AG04450 (cell line): ENCODE measurements at regions of chr2 and their contacts with region 1.

Region 1: GRCh38 chr2:71798266-71799012 is 345.1 kb downstream of the DYSF start:
- DNase-seq: no peak
- H3K4me3 ChIP-seq: no peak overlapping the region
- H3K27ac ChIP-seq: no peak overlapping the region
- H3K27me3 ChIP-seq: peaks cover 5% of the 10 kb centered on the region
- CTCF ChIP-seq: peak; percentile 74

Region 2: GRCh38 chr2:71452565-71452964 is 345.9 kb before region 1 on chr2:
- CTCF ChIA-PET with region 1: no interaction called
- POLR2A ChIA-PET with region 1: no interaction called
- DNase-seq: no peak
- H3K4me3 ChIP-seq: no peak overlapping the region
- H3K27ac ChIP-seq: no peak overlapping the region
- H3K27me3 ChIP-seq: peaks cover 31% of the 10 kb centered on the region
- CTCF ChIP-seq: no peak

Region 3: DNA sequence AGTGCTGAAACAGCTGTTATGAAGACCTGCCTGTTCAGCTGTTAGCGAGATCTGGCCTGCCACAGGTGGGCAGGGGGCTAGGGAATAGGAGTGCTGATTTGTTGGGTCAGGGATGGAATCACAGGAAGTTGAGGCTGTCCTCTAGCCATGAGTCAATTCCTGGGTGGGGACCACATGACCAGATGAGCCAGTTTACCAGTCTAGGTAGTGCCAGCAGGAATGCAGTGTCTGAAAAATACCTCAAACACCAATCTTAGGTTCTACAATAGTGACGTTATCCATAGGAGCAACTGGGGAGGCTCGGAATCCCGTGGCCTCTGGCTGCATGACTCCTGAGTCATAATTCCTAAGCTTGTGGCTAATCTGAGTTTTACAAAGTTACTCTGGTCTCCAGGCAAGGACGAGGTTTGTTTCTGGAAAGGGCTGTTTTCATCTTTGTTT is 300.2 kb before region 1 on chr2:
- CTCF ChIA-PET with region 1: no interaction called
- POLR2A ChIA-PET with region 1: no interaction called
- DNase-seq: peak; percentile 26
- H3K4me3 ChIP-seq: no peak overlapping the region
- H3K27ac ChIP-seq: peak overlapping the region; percentile 53
- H3K27me3 ChIP-seq: no peaks in the 10 kb centered on the region
- CTCF ChIP-seq: no peak

Region 4: DNA sequence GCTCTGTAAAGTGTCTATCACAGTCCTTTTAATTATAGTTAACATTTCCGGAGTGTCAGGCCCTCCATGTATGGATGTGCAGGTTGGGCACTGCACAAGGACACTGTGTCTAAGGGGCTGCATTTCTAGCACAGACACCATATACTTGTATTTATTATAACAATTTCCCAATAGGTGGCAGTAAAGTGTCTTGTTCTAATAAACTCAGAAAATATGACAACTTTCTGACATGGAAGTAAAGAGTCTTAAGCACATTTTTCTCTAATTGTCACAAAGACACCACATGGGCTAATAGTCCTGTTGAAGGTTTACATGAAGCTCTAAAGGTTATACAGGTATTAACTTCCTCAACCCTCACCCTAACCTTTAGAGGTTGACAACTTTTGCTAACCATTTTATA is 188.5 kb before region 1 on chr2:
- CTCF ChIA-PET with region 1: interaction called, 19 read pairs
- POLR2A ChIA-PET with region 1: no interaction called
- DNase-seq: no peak
- H3K4me3 ChIP-seq: no peak overlapping the region
- H3K27ac ChIP-seq: no peak overlapping the region
- H3K27me3 ChIP-seq: peaks cover 31% of the 10 kb centered on the region
- CTCF ChIP-seq: peak; percentile 33

Region 5: DNA sequence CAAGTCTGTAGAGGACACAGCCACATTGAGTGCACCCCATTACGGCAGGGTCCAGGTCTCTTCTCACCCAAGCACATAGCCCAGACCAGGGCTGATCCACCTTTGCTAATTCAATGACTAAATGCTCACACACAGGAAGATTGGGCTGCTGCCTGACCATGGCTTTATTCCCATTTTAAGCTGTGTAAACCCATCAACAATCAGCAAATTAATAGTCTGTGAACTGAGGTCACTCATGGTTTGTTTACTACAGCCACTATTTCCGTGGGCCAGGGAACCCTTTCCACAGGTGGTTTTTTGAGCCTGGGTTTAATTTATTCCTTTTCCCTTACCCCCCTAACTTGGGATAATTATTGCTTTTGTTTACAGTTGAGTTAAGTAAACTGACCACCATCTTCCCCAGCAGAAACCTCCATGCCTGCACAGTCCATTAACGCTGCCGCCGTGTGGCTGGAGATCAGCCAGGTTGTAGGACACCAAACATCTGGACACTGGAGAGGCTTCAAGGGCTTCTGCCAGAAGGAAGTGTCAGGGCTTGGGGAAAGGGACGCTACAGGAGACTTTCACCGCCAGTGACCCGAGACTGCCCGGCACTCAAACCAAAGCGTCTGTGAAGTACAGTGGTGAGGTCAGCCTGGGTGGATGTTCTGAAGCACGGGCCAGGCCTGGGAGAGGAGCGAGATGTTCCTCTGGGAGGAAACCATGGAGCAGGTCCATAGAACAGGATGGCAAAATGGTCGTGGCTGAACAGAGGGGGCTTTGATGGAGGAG is 62.2 kb before region 1 on chr2:
- CTCF ChIA-PET with region 1: no interaction called
- POLR2A ChIA-PET with region 1: interaction called, 12 read pairs
- DNase-seq: no peak
- H3K4me3 ChIP-seq: no peak overlapping the region
- H3K27ac ChIP-seq: no peak overlapping the region
- H3K27me3 ChIP-seq: peaks cover 27% of the 10 kb centered on the region
- CTCF ChIP-seq: no peak

Region 6: DNA sequence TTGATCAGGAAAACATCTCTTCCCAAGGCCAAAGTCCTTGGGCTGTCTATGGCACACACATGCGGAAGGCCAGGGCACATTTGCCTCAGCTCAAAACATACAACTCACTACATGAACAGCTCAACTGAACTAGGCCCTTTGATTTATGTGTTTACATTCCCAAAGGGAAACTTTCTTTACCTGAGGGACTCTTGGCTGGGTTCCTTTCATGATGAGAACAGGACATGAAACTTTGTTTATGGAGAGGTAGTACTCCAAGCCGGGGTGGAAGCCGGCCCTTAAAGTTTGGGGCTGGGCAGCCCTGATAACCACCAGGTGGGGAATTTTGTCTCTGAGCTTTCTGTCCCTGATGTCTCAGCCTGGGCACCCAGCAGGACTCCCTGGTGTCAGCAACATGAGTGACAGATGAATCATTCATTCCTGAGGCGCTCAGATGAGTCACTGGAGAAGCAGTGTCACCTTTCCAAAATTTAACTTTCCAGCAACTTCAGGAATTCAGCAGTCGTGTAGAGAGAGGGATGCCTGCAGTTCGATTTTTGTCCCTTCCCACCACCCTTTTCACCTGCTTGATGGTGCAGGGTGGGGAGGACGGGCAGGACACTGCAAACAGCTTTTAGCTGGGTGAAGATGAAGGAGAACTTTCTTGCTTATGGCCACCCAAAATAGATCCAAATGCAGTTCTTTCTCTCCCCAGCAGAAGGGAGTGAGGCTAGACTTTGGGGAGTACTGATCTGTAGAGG is 13.5 kb before region 1 on chr2:
- CTCF ChIA-PET with region 1: interaction called, 21 read pairs
- POLR2A ChIA-PET with region 1: no interaction called
- DNase-seq: no peak
- H3K4me3 ChIP-seq: no peak overlapping the region
- H3K27ac ChIP-seq: peak overlapping the region; percentile 11
- H3K27me3 ChIP-seq: peaks cover 3% of the 10 kb centered on the region
- CTCF ChIP-seq: no peak

Region 7: GRCh38 chr2:71889991-71890684 is 91.7 kb after region 1 on chr2:
- CTCF ChIA-PET with region 1: no interaction called
- POLR2A ChIA-PET with region 1: no interaction called
- DNase-seq: no peak
- H3K4me3 ChIP-seq: no peak overlapping the region
- H3K27ac ChIP-seq: no peak overlapping the region
- H3K27me3 ChIP-seq: peaks cover 19% of the 10 kb centered on the region
- CTCF ChIP-seq: no peak

Region 8: DNA sequence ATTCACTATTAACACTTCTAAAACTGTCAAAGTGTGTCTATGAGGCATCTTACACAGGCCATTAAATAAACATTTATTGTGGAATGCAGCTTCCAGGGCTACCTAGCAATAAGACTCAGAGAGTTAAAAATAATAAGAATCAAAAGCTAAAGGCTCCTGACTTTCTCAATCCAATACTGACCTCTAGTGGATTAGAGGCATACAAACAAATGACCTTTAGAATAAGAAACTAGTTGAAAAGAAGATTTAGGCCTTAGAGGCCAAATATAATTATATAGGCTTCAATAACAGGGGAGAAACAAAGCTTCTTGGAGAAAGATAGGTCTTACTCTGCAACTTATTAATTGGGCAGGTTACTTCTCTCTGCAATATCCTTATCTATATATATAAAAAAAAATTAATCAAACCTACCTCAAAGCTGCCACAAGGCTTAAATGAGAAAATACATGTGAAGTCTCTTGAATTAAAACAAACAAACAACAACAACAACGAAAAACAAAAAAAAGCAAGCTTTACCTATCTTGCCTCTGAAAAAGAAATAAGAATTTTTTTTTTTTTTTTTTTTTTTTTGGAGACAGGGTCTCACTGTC is 781.2 kb after region 1 on chr2:
- CTCF ChIA-PET with region 1: interaction called, 11 read pairs
- POLR2A ChIA-PET with region 1: no interaction called
- DNase-seq: peak; percentile 11
- H3K4me3 ChIP-seq: no peak overlapping the region
- H3K27ac ChIP-seq: no peak overlapping the region
- H3K27me3 ChIP-seq: no peaks in the 10 kb centered on the region
- CTCF ChIP-seq: peak; percentile 71